OCI-LY7 (cell line): ENCODE measurements at regions of chr17 and their contacts with region 1.

Region 1: DNA sequence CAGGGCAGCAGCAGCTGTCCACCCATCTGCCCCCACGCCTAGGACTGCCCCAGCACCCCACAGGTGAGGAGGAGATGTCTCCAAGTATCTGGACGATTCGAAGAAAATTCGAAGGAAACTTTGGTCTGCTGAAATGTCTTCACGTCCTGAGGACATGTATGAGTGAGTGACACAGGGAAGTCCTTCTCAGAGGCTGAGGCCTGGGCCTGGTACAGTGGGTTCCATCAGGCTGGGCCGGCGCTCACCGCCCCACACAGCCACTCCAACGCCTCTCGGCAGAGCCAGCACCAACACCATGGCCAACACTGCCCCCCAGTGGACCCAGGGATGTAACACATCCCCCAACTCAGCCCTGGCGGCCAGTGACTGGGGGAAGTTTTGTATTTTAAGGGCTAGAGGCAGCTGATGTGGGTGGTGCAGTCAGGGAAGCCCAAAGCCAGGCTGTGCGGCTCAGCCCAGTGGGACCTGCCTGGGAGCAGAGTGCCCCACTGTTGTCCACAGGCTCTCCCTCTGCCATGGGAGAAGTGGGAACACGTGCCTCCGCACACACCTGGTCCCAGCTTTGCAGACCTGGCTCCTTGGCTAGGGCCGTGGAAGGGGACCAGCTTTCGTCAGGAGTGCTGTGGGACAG is 55.8 kb upstream of the FASN start:
- DNase-seq: peak; percentile 85
- H3K4me3 ChIP-seq: no peak overlapping the region
- H3K27ac ChIP-seq: no peak overlapping the region
- H3K4me1 ChIP-seq: no peaks in the 10 kb centered on the region
- CTCF ChIP-seq: peak; percentile 99

Region 2: DNA sequence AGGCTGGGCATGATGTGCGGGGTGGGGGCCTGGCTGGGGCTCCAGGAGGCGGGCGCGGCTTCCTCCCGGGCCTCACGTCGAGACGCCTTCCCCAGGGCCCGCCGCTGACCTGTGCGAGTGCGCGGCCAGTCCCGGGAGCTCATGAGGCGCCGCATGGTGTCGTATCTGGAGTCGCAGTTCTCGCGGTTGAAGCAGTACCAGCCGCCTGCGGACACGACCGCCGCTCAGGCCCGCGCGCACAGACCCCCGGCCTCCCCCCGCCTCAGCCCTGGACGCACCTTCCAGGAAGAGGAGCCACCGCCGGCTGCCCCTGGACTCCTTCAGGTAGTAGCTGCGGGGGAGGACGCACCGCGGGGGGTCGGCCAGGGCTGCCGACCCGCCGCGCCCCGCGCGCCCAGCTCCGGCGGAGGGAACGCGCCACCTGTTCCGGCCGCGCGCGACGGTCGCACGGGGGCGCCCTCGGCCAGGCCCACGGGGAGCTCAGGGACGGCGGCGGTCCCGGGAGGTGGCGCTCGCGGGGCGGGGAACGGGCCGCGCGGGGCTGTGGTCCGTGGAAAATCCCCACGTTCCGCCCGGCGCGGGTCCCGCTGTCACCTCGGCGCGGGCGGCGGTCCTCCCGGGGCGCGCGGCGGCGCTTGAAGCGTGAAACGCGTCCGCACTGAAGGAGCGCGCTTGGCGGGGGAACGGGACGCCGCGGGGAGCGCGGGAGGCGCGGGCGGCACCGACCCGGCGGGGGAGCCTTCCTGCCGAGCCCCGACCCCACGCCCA is 194.3 kb before region 1 on chr17:
- CTCF ChIA-PET with region 1: no interaction called
- POLR2A ChIA-PET with region 1: no interaction called
- intact Hi-C with region 1: loop called (anchors 1 kb)
- DNase-seq: peak; percentile 83
- H3K4me3 ChIP-seq: peak overlapping the region; percentile 58
- H3K27ac ChIP-seq: no peak overlapping the region
- H3K4me1 ChIP-seq: peaks cover 11% of the 10 kb centered on the region
- CTCF ChIP-seq: peak; percentile 88

Region 3: GRCh38 chr17:82030470-82031302 is 123.2 kb before region 1 on chr17:
- CTCF ChIA-PET with region 1: no interaction called
- POLR2A ChIA-PET with region 1: no interaction called
- intact Hi-C with region 1: loop called (anchors 1 kb)
- DNase-seq: peak; percentile 85
- H3K4me3 ChIP-seq: peak overlapping the region; percentile 51
- H3K27ac ChIP-seq: no peak overlapping the region
- H3K4me1 ChIP-seq: peaks cover 12% of the 10 kb centered on the region
- CTCF ChIP-seq: peak; percentile 85

Region 4: DNA sequence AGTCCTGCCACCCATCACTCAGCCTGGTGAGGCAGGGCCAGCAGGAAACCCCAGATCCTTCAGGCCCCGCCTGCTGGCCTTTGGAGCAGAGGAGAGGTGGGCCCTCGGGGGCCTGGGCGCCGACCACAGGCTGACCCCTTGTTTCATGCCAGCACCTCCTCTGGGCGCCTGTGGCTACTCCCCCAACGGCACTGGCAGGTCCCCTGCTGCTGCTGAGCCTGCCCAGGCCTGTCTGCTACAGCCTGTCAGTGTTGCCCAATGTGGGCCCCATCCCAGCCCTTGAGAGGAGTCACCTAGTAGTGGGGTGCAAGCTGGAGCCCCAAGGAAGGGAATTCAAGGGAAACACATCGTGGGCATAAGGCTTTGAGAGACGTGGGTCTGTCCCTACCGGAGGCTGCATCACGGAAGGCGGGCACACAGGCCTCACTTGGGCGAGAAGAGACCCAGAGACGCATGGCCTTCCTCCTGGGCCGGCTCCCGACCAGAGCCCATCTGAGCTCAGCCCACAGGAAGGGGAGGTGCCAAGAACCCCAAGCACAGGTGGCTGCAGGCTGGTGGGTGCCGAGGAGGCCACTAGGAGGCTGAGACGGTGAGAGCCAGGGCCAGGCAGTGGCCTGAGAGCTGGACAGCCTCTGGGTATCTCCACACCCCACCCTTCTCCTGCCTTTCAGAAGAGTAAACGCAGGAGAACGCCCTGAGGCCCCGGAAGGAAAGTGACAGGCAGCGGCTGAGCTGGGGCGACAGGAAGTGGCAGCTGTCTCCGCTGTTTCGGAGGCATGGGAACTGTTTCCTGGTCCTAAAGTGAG is 47.8 kb before region 1 on chr17:
- CTCF ChIA-PET with region 1: no interaction called
- POLR2A ChIA-PET with region 1: no interaction called
- intact Hi-C with region 1: loop called (anchors 2 kb)
- DNase-seq: peak; percentile 87
- H3K4me3 ChIP-seq: peak overlapping the region; percentile 58
- H3K27ac ChIP-seq: peak overlapping the region; percentile 62
- H3K4me1 ChIP-seq: peaks cover 46% of the 10 kb centered on the region
- CTCF ChIP-seq: peak; percentile 67